Testis (tissue), 5 donors: ENCODE measurements at regions of chr13 and their contacts with region 1.

Region 1: DNA sequence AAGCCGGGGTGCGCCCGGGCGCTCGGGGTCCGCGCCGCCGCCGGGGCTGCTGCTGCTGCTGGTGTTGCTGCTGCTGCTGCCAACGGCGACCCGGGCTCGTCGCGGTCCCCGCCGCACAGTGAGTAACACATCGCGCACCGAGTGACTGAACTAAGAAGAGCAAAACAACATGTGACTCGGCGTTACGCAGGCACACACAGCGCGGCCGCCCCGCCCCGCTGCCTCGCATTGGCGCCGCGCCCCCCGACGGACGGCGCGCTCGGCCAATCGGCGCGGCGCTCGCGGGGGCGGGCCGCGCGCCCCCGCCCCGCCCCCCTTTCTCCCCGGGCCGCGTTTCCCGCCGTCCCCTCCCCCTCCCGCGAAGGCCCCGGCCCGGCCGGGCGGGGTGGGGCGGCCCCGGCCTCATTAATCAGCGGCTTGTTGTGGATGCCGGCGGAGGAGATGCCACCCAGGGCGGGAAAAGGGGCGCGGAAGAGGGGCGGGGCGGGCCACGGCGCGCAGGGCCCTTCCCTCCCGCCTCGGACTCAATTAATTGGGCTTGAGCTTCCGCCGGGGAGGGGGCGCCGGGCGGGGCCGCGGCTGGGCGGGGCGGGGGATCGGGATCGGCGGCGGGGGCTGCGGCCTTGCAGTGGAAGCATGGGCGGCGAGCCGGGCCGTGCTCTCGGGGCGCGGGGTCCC is at the start of gene IRS2:
- DNase-seq: peak; percentile 98
- H3K4me3 ChIP-seq: peak within 1 kb of the TSS; percentile 81 to 85
- H3K27ac ChIP-seq: peak within 1 kb of the TSS; percentile 83 to 90
- H3K4me1 ChIP-seq: peaks cover 11% of the 10 kb centered on the region
- H3K27me3 ChIP-seq: no peaks in the 10 kb centered on the region
- CTCF ChIP-seq: no peak
- POLR2A ChIP-seq: peak; percentile 91
- total RNA-seq, gene IRS2: 23.9 to 33.4 TPM

Region 2: GRCh38 chr13:108957369-108958012 is 829.1 kb before region 1 on chr13:
- intact Hi-C with region 1: loop called (anchors 10 kb)
- DNase-seq: no peak
- H3K4me3 ChIP-seq: no peak overlapping the region
- H3K27ac ChIP-seq: no peak overlapping the region
- H3K4me1 ChIP-seq: no peaks in the 10 kb centered on the region
- H3K27me3 ChIP-seq: no peaks in the 10 kb centered on the region
- CTCF ChIP-seq: no peak
- POLR2A ChIP-seq: no peak

Region 3: DNA sequence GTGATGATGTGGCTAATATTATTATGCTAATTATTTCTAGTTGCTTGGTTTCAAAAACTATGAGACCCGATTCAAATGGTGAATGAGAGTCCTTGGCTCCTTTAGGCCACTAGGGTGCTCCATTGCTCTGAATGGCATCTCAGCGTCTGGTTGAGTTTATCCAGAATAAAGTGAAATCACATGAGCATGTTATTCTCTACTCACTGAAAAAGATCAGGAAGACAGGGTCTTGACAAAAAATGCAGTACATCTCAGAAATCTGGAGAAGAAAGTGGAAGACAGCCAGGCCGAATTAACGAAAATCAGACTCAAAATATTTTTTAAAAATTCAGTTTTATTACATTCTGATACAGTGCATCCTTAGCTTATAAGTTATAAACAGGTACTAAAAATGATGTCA is 641.0 kb before region 1 on chr13:
- intact Hi-C with region 1: loop called (anchors 10 kb)
- DNase-seq: peak; percentile 66
- H3K4me3 ChIP-seq: no peak overlapping the region
- H3K27ac ChIP-seq: no peak overlapping the region
- H3K4me1 ChIP-seq: no peaks in the 10 kb centered on the region
- H3K27me3 ChIP-seq: no peaks in the 10 kb centered on the region
- CTCF ChIP-seq: peak; percentile 44 to 78 (median 54)
- POLR2A ChIP-seq: no peak